Activated CD4-positive, alpha-beta T cell treated with anti-CD3 and anti-CD28 coated beads for 36 hours (primary cell): ENCODE measurements at regions of chr1 and their contacts with region 1.

Region 1: DNA sequence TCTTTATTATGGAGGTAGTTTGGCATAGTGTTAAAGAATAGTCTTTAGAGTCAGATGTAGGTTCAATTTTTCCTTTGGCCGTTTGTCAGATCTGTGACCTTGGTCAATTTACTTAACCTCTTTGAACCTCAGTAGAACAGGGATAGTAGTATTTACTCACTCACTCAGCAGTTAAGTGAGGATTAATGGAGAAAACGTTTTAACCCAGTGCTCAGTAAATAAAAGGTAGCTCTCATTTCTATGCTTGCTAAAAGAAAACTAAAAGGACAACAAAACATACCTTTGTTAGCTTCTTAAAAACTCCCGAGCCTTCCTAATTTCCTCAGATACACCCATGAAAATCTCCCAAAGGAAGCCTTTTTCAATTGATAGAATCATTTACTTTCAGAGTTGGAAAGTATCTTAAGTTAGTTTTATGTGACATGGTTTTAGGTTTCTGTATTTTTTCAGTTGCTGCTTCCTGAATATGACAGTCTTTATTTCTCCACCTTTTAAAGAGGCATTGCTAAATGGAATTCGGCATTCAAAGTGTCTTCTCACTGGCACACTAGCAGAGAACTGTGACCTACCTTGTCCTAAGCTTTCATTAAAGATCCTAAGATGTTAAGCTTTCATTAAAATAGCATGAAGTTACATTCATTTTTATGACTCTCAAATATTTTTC is 7.8 kb downstream of the ABCD3 start:
- DNase-seq: no peak
- ATAC-seq: no peak
- H3K4me3 Mint-ChIP-seq: peak overlapping the region; percentile 10
- H3K27ac Mint-ChIP-seq: peak overlapping the region; percentile 7
- H3K4me1 Mint-ChIP-seq: peaks cover 66% of the 10 kb centered on the region
- H3K27me3 Mint-ChIP-seq: no peaks in the 10 kb centered on the region

Region 2: GRCh38 chr1:94438692-94439276 is 12.8 kb after region 1 on chr1:
- CTCF ChIA-PET with region 1: interaction called, 3 read pairs
- POLR2A ChIA-PET with region 1: interaction called, 4 read pairs
- intact Hi-C with region 1: loop called in 1 of 2 experiments (anchors 1 kb)
- DNase-seq: no peak
- ATAC-seq: no peak
- H3K4me3 Mint-ChIP-seq: no peak overlapping the region
- H3K27ac Mint-ChIP-seq: no peak overlapping the region
- H3K4me1 Mint-ChIP-seq: peaks cover 35% of the 10 kb centered on the region
- H3K27me3 Mint-ChIP-seq: no peaks in the 10 kb centered on the region